Lower leg skin (tissue), 4 donors: ENCODE measurements at regions of chr15 and their contacts with region 1.

Region 1: DNA sequence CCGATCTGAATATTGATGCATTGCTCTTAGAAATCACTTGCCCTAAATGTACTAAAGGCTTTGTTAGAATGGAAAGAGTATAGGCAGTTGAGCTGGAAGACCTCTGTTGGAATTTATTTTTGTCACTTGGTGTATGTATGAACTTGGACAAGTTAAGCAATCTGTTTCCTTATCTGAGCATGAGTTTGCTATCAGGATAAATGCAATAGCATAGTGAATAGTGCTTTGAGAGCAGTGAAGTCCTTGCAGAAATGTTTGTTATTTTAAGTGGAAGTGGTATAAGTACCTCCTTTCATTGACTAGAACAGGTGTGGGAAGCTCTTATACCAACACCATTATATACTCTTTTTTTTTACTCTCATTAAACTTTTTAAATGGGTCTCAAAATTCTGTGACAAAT is 146.4 kb upstream of the ONECUT1 start:
- DNase-seq: no peak
- H3K4me3 ChIP-seq: no peak overlapping the region
- CTCF ChIP-seq: no peak
- POLR2A ChIP-seq: no peak

Region 2: DNA sequence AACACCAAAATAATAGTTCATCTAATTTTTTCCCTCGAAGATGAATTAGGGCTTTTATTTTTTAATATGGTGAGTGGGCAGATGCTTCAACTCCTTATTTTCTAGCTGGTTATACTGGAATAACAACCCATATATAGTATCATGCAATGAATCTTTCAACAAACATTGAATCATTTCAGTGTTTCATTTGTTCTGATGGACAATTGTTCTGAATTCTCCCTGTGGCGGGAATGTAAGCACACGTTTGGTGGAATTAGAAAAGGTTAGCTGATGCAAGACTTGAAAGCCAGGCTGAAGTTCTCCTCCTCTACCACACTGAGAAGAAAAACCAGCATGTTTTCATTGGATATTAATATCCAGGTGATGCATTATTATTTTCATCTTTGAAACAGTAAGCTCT is 31.5 kb after region 1 on chr15:
- intact Hi-C with region 1: loop called (anchors 1 kb)
- DNase-seq: no peak
- H3K4me3 ChIP-seq: no peak overlapping the region
- CTCF ChIP-seq: no peak
- POLR2A ChIP-seq: no peak